ENCODE measurements at regions of chr6 and their contacts with region 1.

Region 1: DNA sequence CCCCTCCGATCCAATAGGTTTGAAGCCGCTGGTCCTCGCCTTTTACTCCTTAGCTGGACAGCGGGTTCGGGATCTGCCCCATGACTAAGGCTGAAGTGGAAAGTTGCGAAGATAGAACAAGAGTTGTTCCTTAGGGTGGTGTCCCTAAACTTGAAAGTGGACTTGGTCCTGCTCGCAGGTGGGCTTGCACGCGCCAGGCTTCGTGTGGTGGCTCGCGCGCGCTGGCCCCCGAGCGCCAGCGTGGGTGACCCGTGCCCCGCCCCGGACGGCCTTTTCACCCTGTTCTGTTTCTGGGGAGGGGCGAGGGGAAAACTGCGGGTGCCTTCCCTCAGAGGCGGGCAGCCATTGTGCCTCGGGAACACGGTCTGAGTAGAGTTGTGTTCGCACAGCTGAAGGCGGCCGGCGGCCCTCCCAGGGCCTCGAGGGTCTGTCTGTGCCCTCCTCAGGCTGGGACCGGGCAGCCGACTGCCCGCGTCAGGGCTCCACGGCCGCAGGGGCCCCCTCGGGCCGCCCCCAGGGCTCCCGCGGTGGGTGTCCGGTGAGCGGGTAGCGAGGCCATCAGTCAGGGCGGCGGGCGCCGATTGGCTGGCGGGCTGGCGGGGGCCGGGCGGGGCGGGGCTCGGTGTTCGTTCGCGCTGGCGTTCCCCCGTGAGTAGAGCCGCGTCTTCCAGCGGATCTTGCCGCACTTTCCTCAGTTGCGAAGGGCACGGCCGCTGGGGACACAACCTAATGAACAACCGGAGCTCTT is 33.0 kb downstream of the RREB1 start:
- DNase-seq: peak; percentile 89
- H3K4me3 ChIP-seq: peak overlapping the region; percentile 65 to 74
- H3K27ac ChIP-seq: peak overlapping the region; percentile 97
- H3K4me1 ChIP-seq: peaks cover 28% of the 10 kb centered on the region
- H3K27me3 ChIP-seq: no peaks in the 10 kb centered on the region
- CTCF ChIP-seq: peak in 1 of 4 experiments; percentile 4
- POLR2A ChIP-seq: peak; percentile 75

Region 2: DNA sequence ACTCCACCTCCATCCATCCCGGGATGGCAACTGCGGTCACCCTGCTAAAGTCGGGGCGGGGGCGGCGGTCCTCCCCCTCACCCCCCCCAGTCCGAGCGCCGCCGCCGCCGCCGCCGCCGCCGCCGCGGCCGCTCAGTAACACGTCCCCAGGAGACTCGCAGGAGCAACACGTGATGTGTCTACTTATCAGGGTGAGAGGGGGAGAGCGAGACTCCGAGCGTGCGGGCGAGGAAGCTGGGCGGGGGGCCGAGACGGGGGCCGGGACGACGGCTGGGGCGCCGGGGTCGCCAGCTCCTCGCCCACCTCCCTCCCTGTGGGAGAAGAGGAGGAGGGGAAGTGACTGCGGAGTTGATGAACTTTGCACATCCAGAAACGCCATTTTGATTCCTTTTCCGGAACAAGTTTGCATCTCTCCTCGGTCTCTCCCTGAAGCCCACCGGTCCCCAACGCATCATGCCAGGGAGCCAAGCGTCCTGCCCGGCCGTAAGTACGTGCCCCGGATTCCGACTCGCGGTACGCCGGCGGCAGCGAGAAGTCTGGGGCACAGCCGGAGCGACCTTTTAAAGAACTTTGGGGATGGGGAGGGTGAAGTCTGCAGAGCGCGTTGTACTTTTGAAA is 33.1 kb before region 1 on chr6 and contains the start of gene RREB1:
- intact Hi-C with region 1: loop called (anchors 2 kb)
- DNase-seq: peak; percentile 76
- H3K4me3 ChIP-seq: peak within 1 kb of the TSS; percentile 79 to 88
- H3K27ac ChIP-seq: peak within 1 kb of the TSS; percentile 88 to 97
- H3K4me1 ChIP-seq: no peaks in the 10 kb centered on the region
- H3K27me3 ChIP-seq: no peaks in the 10 kb centered on the region
- CTCF ChIP-seq: no peak
- POLR2A ChIP-seq: peak; percentile 56
- total RNA-seq, gene RREB1: 58.4 to 71.0 TPM

Region 3: DNA sequence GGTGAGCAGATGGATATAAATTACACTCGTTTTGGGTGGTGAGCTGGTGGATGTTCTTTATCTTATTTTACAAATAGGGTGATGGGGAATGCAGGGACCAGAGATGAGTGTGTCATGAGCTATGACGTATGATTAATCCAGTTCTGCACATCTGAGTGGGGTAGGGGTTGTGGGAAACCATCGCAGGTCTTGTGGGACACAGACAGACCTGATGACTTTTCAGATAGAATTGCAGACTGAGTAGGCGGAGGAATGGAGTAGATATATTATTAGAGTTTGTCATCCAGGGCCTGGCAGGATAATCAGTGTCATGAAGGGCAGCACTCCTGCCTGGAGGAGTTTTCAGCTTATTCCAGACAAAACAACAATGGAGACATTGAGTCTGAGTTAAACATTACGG is 387.8 kb after region 1 on chr6:
- intact Hi-C with region 1: no loop called
- DNase-seq: no peak
- H3K4me3 ChIP-seq: no peak overlapping the region
- H3K27ac ChIP-seq: no peak overlapping the region
- H3K4me1 ChIP-seq: no peaks in the 10 kb centered on the region
- H3K27me3 ChIP-seq: no peaks in the 10 kb centered on the region
- CTCF ChIP-seq: no peak
- POLR2A ChIP-seq: no peak

Measured in prostate gland (tissue), 2 donors.